ENCODE measurements at regions of chr5 and their contacts with region 1.

Region 1: DNA sequence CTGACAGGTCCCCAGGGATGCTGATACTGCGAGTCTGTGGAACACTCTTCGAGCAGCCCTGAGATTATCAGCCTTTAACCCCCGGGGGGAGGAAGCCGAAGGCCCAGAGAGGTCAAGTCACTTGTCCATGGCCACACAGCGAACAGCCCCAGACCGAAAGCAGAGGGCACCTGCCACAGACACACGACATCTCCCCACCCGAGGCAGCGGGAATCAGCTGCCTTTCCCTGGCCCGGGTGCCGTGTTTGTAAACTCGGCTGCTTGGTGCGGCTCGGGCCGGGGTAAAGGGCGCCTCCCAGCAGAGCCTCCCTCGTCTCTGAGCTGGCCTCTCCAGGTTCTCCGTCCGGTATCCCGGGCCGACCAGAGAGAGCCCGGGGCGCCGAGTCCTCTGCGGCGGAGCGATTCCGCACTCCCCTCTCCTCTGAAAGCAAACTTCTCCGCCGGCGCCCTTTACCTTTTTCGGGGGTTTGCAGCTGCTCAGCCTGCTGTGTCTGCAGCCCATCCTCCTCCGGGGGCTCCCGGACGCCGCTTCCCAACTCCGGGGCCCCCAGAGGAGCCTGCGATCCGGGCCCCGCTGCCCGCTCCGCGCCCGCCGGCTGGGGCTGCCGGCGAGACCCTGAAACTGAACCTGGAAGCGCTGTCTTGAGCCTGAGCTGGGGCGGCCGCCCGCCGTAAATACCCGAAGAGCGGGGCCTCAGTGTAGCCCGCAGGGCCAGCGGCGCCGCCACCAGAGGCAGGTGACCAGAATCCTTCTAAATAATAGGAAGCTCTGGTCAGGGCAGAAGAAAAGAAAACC is at the start of gene CCDC69:
- DNase-seq: no peak
- ATAC-seq: peak; percentile 82
- H3K4me3 ChIP-seq: peak within 1 kb of the TSS; percentile 97
- H3K27ac ChIP-seq: peak within 1 kb of the TSS; percentile 89
- H3K4me1 ChIP-seq: peaks cover 24% of the 10 kb centered on the region
- H3K27me3 ChIP-seq: no peaks in the 10 kb centered on the region
- CTCF ChIP-seq: no peak
- EP300 ChIP-seq: no peak
- POLR2A ChIP-seq: peak; percentile 80
- RAD21 ChIP-seq: 0 out of 2 replicates have a peak, but pooled peaks have one; percentile 16
- polyA plus RNA-seq, gene CCDC69: 13.5 to 21.4 TPM

Region 2: DNA sequence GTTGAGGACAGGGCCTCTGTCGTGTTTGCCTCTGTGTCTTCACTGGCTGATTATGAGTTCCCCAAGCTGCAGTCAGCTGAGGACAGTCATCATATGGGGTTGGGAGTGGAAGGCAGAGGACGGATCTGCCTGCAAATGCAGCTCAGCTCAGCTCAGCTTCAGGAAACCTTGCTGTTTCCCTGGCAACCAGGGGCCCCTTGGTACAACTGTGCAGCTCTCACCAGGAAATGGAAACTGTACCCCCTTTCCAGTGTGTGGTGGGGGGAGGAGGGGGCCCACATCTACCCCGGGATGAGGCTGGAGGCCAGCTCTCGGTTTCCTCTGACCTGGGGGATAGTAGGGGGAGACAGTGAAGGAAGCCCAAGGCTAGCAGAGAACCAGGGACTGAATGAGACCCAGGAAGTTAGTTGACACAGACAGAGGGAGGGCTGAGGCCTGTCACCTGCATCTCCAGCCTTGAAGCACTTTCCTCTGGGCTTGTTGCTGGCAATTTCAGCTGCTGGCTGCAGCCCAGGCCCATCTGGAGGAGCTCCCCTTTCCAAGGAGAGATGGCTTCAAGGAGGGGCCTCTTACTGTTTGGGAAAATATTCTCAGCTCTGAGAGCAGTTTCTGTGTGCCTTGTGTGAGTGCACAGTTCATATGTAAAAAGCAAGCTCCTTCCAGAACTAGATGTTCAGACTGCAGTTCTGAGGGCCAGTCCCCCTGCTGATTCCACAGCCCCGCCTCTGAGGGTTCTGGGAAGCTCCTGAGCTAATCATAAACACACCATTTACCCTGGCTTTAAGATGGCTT is 73.0 kb before region 1 on chr5:
- CTCF ChIA-PET with region 1: interaction called, 9 read pairs
- POLR2A ChIA-PET with region 1: interaction called, 6 read pairs
- RAD21 ChIA-PET with region 1: interaction called, 11 read pairs
- SMC1A ChIA-PET with region 1: interaction called, 3 read pairs
- in situ Hi-C with region 1: no loop called
- intact Hi-C with region 1: no loop called
- DNase-seq: peak; percentile 50
- ATAC-seq: peak; percentile 51
- H3K4me3 ChIP-seq: peak overlapping the region; percentile 57
- H3K27ac ChIP-seq: peak overlapping the region; percentile 89
- H3K4me1 ChIP-seq: peaks cover 62% of the 10 kb centered on the region
- H3K27me3 ChIP-seq: no peaks in the 10 kb centered on the region
- CTCF ChIP-seq: no peak
- EP300 ChIP-seq: no peak
- POLR2A ChIP-seq: peak; percentile 70
- RAD21 ChIP-seq: no peak